Gastrocnemius medialis (tissue), 4 donors: ENCODE measurements at regions of chr6 and their contacts with region 1.

Region 1: GRCh38 chr6:15512126-15512525 is 150.7 kb downstream of the DTNBP1 start:
- DNase-seq: peak in 1 of 2 donors; percentile 55
- ATAC-seq: peak in 1 of 2 donors; percentile 22
- H3K4me3 ChIP-seq: no peak overlapping the region
- H3K27ac ChIP-seq: peak overlapping the region; percentile 86 to 92 (median 88)
- H3K4me1 ChIP-seq: peaks cover 36 to 54% of the 10 kb centered on the region in 2 donors
- H3K27me3 ChIP-seq: no peaks in the 10 kb centered on the region
- CTCF ChIP-seq: peak; percentile 5 to 55 (median 41)
- POLR2A ChIP-seq: no peak

Region 2: DNA sequence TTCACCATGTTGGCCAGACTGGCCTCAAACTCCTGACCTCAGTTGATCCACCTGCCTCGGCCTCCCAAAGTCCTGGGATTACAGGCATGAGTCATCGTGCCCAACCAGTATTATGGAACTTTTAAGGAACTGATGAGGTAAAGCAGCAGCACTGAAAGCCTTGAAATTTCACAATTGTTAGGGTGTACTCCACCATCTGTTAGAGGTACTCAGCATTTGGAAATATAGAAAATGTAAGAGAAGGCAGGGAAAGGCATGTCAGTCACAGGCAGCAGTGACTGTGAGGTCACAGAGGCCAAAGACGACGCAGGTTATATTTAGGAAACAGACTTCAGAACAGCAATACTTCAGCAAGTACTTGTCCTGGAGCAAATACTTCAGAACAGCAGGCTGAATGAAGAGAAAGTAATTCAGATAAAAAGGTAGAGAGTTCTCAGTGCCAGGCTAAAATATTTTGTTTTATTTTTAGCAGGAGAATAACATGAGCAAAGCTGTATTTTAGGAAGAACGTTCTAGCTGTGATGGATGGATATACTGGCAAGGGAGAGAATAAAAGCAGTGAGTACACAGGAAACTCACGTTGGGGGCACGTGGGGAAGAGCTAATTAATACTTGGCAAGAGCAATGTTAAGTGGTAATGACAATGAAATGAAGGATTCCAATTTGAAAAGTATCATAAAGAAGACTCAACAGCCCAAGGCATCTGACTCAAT is 83.5 kb after region 1 on chr6:
- in situ Hi-C with region 1: loop called in 1 of 4 experiments (anchors 25 kb)
- intact Hi-C with region 1: loop called (anchors 2 kb)
- DNase-seq: peak in 1 of 2 donors; percentile 65
- ATAC-seq: peak; percentile 70 to 91
- H3K4me3 ChIP-seq: no peak overlapping the region
- H3K27ac ChIP-seq: peak overlapping the region; percentile 69 to 83 (median 72)
- H3K4me1 ChIP-seq: peaks cover 34 to 40% of the 10 kb centered on the region in 2 donors
- H3K27me3 ChIP-seq: no peaks in the 10 kb centered on the region
- CTCF ChIP-seq: no peak
- POLR2A ChIP-seq: no peak